ENCODE measurements at regions of chr6 and their contacts with region 1.

Region 1: GRCh38 chr6:33761922-33762629 is 15.4 kb upstream of the IP6K3 start:
- DNase-seq: peak; percentile 67
- ATAC-seq: peak; percentile 80
- H3K4me3 Mint-ChIP-seq: no peak overlapping the region
- H3K27ac Mint-ChIP-seq: no peak overlapping the region
- H3K4me1 Mint-ChIP-seq: peaks cover 13% of the 10 kb centered on the region
- H3K27me3 Mint-ChIP-seq: no peaks in the 10 kb centered on the region

Region 2: DNA sequence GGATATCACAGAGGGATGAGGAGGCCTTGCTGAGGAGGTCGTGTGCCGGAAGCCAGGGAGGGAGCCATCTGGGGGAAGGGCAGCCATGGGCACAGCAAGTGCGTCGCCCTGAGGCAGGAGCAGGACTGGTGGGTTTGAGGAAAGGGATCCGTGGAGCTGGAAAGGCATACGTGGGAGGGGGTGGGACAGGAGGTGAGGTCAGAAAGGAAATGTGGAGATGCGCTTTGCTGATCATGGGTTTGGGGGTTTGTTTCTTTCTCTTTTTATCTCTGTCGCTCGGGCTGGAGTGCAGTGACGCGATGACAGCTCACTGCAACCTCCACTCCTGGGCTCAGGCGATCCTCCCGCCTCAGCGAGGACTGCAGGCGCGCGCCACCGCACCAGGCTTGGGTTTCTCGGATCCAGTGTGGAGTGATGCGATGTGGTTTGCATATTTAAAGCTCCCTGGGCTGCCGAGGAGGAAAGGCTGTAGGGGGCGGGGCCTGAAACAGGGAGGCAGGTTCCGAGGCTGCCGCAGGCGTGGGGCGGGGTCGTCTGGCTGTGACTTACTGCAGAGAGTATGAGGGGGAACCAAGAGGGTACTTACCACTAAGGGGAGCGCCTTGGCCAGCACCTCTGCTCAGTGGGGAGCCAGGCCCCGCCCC is 169.5 kb before region 1 on chr6:
- CTCF ChIA-PET with region 1: no interaction called
- POLR2A ChIA-PET with region 1: no interaction called
- DNase-seq: peak; percentile 35
- ATAC-seq: peak; percentile 43
- H3K4me3 Mint-ChIP-seq: peak overlapping the region; percentile 66
- H3K27ac Mint-ChIP-seq: peak overlapping the region; percentile 1
- H3K4me1 Mint-ChIP-seq: peaks cover 31% of the 10 kb centered on the region
- H3K27me3 Mint-ChIP-seq: no peaks in the 10 kb centered on the region

Region 3: GRCh38 chr6:33744001-33744848 is 17.9 kb before region 1 on chr6:
- CTCF ChIA-PET with region 1: interaction called, 40 read pairs
- POLR2A ChIA-PET with region 1: no interaction called
- DNase-seq: peak; percentile 80
- ATAC-seq: peak; percentile 87
- H3K4me3 Mint-ChIP-seq: no peak overlapping the region
- H3K27ac Mint-ChIP-seq: no peak overlapping the region
- H3K4me1 Mint-ChIP-seq: no peaks in the 10 kb centered on the region
- H3K27me3 Mint-ChIP-seq: peaks cover 13% of the 10 kb centered on the region